ENCODE measurements at regions of chr12 and their contacts with region 1.

Region 1: DNA sequence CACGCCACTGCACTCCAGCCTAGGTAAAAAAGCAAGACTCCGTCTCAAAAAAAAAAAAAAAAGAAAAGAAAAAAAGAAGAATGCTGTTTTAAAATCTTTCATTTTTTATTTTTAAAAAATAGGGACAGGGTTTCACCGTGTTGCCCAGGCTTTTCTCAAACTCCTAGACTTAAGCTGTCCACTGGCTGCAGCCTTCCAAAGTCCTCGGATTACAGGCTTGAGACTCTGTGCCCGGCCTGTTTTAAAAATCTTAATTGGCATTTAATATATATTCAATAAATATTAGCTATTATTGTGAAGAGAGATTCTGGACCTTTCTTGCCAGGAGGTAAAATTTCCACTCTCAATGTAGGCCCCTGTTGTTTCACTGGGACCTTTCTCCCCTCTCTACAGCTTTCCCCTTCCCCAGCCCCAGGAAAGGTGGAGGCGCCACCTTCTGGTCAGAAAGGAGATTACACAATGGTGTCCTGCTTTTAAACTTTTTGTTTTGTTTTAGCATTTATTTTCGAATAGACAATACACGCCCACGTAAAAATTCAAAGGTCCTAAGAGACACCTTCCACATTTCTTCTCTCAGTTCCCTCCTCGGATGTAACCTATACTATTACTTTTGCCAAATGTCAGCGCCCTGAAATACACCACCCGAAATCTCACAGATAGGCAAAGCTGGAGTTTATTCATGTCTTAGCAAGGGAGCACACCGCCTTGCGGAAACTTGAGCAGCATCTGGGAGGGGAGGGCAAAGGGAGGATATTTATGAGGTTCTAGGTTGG is 23.8 kb upstream of the PHC1 start:
- DNase-seq: peak; percentile 8
- ATAC-seq: peak; percentile 72
- H3K4me3 ChIP-seq: peak overlapping the region; percentile 75
- H3K27ac ChIP-seq: no peak overlapping the region
- H3K4me1 ChIP-seq: no peaks in the 10 kb centered on the region; the same call in 1 of the 2 replicates
- H3K27me3 ChIP-seq: no peaks in the 10 kb centered on the region
- CTCF ChIP-seq: peak; percentile 80 to 85 (median 82)
- EP300 ChIP-seq: 0 out of 4 replicates have a peak, but pooled peaks of 1 of the 2 experiments have one; percentile 15
- POLR2A ChIP-seq: no peak
- RAD21 ChIP-seq: peak; percentile 91

Region 2: DNA sequence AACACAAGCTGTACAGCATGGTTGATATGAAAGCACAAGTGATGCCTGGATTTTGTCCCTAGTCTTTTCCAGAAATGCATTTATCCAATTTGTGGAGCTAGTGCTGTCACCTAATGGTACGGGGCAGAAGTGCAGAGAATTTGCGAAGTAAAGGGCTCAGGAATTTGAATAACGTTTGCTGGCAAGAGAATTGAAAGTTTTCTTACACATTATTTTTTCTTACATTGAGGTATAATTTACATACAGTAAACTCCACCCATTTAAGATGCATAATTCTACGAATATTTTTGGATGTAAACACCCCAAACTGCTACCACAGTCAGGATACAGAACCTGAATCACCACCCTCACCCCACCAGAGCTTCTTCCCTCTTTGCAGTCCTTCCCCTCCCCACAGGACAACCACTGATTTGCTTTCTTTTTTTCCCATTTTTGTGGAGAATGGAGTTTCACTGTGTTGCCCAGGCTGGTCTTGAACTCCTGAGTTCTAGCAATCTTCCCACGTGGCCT is 281.4 kb before region 1 on chr12:
- CTCF ChIA-PET with region 1: interaction called, 7 read pairs
- POLR2A ChIA-PET with region 1: no interaction called
- RAD21 ChIA-PET with region 1: no interaction called
- SMC1A ChIA-PET with region 1: no interaction called
- in situ Hi-C with region 1: no loop called
- intact Hi-C with region 1: loop called (anchors 5 kb)
- DNase-seq: no peak
- ATAC-seq: peak; percentile 16
- H3K4me3 ChIP-seq: peak overlapping the region; percentile 51
- H3K27ac ChIP-seq: peak overlapping the region; percentile 39
- H3K4me1 ChIP-seq: peaks cover 30% of the 10 kb centered on the region
- H3K27me3 ChIP-seq: no peaks in the 10 kb centered on the region
- CTCF ChIP-seq: peak; percentile 71 to 86 (median 86)
- EP300 ChIP-seq: no peak
- POLR2A ChIP-seq: peak; percentile 51; the same call in 1 of the 2 replicates
- RAD21 ChIP-seq: peak; percentile 75

Region 3: GRCh38 chr12:8681041-8681902 is 209.2 kb before region 1 on chr12:
- CTCF ChIA-PET with region 1: interaction called, 30 read pairs
- POLR2A ChIA-PET with region 1: no interaction called
- RAD21 ChIA-PET with region 1: interaction called, 4 read pairs
- SMC1A ChIA-PET with region 1: interaction called, 12 read pairs
- in situ Hi-C with region 1: loop called (anchors 10 kb)
- intact Hi-C with region 1: loop called (anchors 1 kb)
- DNase-seq: no peak
- ATAC-seq: no peak
- H3K4me3 ChIP-seq: no peak overlapping the region
- H3K27ac ChIP-seq: no peak overlapping the region
- H3K4me1 ChIP-seq: no peaks in the 10 kb centered on the region
- H3K27me3 ChIP-seq: no peaks in the 10 kb centered on the region
- CTCF ChIP-seq: no peak
- EP300 ChIP-seq: no peak
- POLR2A ChIP-seq: no peak
- RAD21 ChIP-seq: no peak

Region 4: DNA sequence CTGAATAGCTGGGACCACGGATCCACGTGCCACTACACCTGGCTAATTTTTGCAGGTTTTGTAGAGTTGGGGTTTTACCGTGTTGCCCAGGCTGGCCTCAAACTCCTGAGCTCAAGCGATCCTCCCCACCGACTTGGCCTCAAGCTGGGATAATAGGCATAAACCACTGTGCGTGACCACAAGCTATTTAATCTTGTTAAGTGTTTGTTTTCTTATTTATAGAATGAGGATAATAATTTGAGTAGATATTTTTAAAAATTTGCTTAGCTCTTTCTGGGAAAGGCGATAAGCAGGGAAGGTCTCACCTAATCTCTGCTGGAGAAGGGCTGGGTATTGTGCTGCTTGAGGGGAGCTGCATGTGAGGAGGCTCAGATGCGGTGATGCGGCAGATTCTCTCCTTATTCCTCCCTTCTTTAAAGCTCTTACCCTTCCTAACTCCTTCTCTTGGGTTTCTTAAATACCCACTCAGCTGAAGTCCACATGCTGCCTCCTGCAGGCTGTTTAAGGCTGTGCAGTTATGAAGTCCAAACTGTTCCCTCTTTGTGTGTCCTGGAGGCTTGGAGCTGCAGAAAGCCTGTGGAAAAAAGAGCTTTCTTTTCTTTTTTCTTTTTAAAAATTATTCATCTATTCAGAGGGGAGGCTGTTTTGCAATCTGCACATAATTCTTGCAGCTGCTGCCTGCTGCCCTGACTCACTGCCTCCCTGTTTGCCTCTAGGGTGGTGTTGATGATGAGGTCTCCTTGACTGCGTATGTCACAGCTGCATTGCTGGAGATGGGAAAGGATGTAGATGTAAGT is 30.1 kb before region 1 on chr12:
- CTCF ChIA-PET with region 1: interaction called, 19 read pairs
- POLR2A ChIA-PET with region 1: no interaction called
- RAD21 ChIA-PET with region 1: no interaction called
- SMC1A ChIA-PET with region 1: interaction called, 8 read pairs
- in situ Hi-C with region 1: no loop called
- intact Hi-C with region 1: no loop called
- DNase-seq: no peak
- ATAC-seq: peak; percentile 60; the same call in 2 of the 3 replicates
- H3K4me3 ChIP-seq: no peak overlapping the region
- H3K27ac ChIP-seq: no peak overlapping the region
- H3K4me1 ChIP-seq: no peaks in the 10 kb centered on the region
- H3K27me3 ChIP-seq: 0 out of 4 replicates have a peak, but pooled peaks cover 0 to 3% of the 10 kb centered on the region in 2 experiments
- CTCF ChIP-seq: peak; percentile 51 to 67 (median 55)
- EP300 ChIP-seq: no peak
- POLR2A ChIP-seq: no peak
- RAD21 ChIP-seq: peak; percentile 63

Region 5: GRCh38 chr12:9049520-9050133 is 159.1 kb after region 1 on chr12:
- CTCF ChIA-PET with region 1: interaction called, 18 read pairs
- POLR2A ChIA-PET with region 1: no interaction called
- RAD21 ChIA-PET with region 1: interaction called, 3 read pairs
- SMC1A ChIA-PET with region 1: interaction called, 7 read pairs
- in situ Hi-C with region 1: no loop called
- intact Hi-C with region 1: no loop called
- DNase-seq: no peak
- ATAC-seq: peak; percentile 74
- H3K4me3 ChIP-seq: no peak overlapping the region
- H3K27ac ChIP-seq: no peak overlapping the region
- H3K4me1 ChIP-seq: no peaks in the 10 kb centered on the region
- H3K27me3 ChIP-seq: peaks cover 0 to 3% of the 10 kb centered on the region in 2 experiments; a peak in 2 of 4 replicates
- CTCF ChIP-seq: peak; percentile 34 to 53 (median 50)
- EP300 ChIP-seq: no peak
- POLR2A ChIP-seq: no peak
- RAD21 ChIP-seq: peak; percentile 61

Region 6: GRCh38 chr12:9064201-9064814 is 173.8 kb after region 1 on chr12:
- CTCF ChIA-PET with region 1: no interaction called
- POLR2A ChIA-PET with region 1: no interaction called
- RAD21 ChIA-PET with region 1: no interaction called
- SMC1A ChIA-PET with region 1: no interaction called
- in situ Hi-C with region 1: no loop called
- intact Hi-C with region 1: no loop called
- DNase-seq: no peak
- ATAC-seq: no peak
- H3K4me3 ChIP-seq: 0 out of 2 replicates have a peak overlapping the region, but pooled peaks have one; percentile 20
- H3K27ac ChIP-seq: no peak overlapping the region
- H3K4me1 ChIP-seq: no peaks in the 10 kb centered on the region
- H3K27me3 ChIP-seq: peaks cover 0 to 4% of the 10 kb centered on the region in 2 experiments; a peak in 3 of 4 replicates
- CTCF ChIP-seq: peak in 2 of 3 experiments; percentile 22 to 23; a peak in 1 of 6 replicates
- EP300 ChIP-seq: no peak
- POLR2A ChIP-seq: no peak
- RAD21 ChIP-seq: peak; percentile 58; the same call in 1 of the 2 replicates

Measured in GM12878 (cell line).